Mammary epithelial cell (primary cell): ENCODE measurements at regions of chr6 and their contacts with region 1.

Region 1: GRCh38 chr6:41787219-41787917 is at the start of gene TOMM6:
- DNase-seq: peak; percentile 92
- H3K4me3 ChIP-seq: peak within 1 kb of the TSS; percentile 63 to 98 (median 97)
- H3K27ac ChIP-seq: peak within 1 kb of the TSS; percentile 95
- H3K4me1 ChIP-seq: peaks cover 20% of the 10 kb centered on the region
- H3K27me3 ChIP-seq: no peaks in the 10 kb centered on the region
- CTCF ChIP-seq: peak; percentile 76 to 90
- total RNA-seq, gene TOMM6: 59.7 to 175 TPM

Region 2: GRCh38 chr6:41713161-41713649 is 74.2 kb before region 1 on chr6:
- CTCF ChIA-PET with region 1: no interaction called
- dilution Hi-C with region 1: loop called (anchors 5 kb)
- in situ Hi-C with region 1: no loop called
- intact Hi-C with region 1: no loop called
- DNase-seq: peak; percentile 96
- H3K4me3 ChIP-seq: peak overlapping the region in 1 of 3 experiments; percentile 1
- H3K27ac ChIP-seq: peak overlapping the region; percentile 51
- H3K4me1 ChIP-seq: peaks cover 51% of the 10 kb centered on the region
- H3K27me3 ChIP-seq: no peaks in the 10 kb centered on the region
- CTCF ChIP-seq: no peak

Region 3: GRCh38 chr6:41846666-41847237 is 59.4 kb after region 1 on chr6:
- CTCF ChIA-PET with region 1: no interaction called
- dilution Hi-C with region 1: no loop called
- in situ Hi-C with region 1: no loop called
- intact Hi-C with region 1: loop called (anchors 1 kb)
- DNase-seq: peak; percentile 98
- H3K4me3 ChIP-seq: peak overlapping the region in 1 of 3 experiments; percentile 1
- H3K27ac ChIP-seq: peak overlapping the region; percentile 74
- H3K4me1 ChIP-seq: peaks cover 13% of the 10 kb centered on the region
- H3K27me3 ChIP-seq: no peaks in the 10 kb centered on the region
- CTCF ChIP-seq: peak; percentile 92 to 93

Region 4: DNA sequence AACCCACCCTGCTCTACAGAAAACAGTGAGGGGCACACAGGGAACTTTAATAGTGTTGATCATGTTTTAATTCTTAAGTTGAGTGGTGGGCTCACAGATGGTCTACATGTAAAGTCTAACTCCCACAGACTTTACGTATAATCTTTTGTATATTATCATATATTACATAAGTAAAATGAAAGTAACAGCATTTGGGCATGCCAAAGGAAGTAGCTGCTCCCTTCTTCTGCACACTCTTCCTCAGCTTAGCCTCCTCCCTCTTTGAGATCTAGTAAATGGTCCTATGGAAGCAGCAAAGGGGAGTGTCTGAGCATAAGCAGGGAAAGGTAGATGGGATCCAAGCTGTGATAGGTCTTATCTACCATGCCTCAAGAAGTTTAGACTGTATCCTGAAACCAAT is 122.4 kb after region 1 on chr6:
- CTCF ChIA-PET with region 1: no interaction called
- dilution Hi-C with region 1: no loop called
- in situ Hi-C with region 1: no loop called
- intact Hi-C with region 1: no loop called
- DNase-seq: no peak
- H3K4me3 ChIP-seq: no peak overlapping the region
- H3K27ac ChIP-seq: no peak overlapping the region
- H3K4me1 ChIP-seq: peaks cover under 1% of the 10 kb centered on the region
- H3K27me3 ChIP-seq: no peaks in the 10 kb centered on the region
- CTCF ChIP-seq: no peak

Region 5: GRCh38 chr6:41936073-41936837 is 148.9 kb after region 1 on chr6:
- CTCF ChIA-PET with region 1: no interaction called
- dilution Hi-C with region 1: no loop called
- in situ Hi-C with region 1: no loop called
- intact Hi-C with region 1: loop called (anchors 1 kb)
- DNase-seq: peak; percentile 80
- H3K4me3 ChIP-seq: no peak overlapping the region
- H3K27ac ChIP-seq: no peak overlapping the region
- H3K4me1 ChIP-seq: peaks cover 34% of the 10 kb centered on the region
- H3K27me3 ChIP-seq: no peaks in the 10 kb centered on the region
- CTCF ChIP-seq: peak; percentile 85 to 95

Region 6: GRCh38 chr6:42217519-42218367 is 430.4 kb after region 1 on chr6 and contains the start of gene MRPS10:
- CTCF ChIA-PET with region 1: no interaction called
- dilution Hi-C with region 1: no loop called
- in situ Hi-C with region 1: loop called in 1 of 2 experiments (anchors 25 kb)
- intact Hi-C with region 1: loop called (anchors 1 kb)
- DNase-seq: peak; percentile 90
- H3K4me3 ChIP-seq: peak within 1 kb of the TSS; percentile 78 to 100 (median 80)
- H3K27ac ChIP-seq: peak within 1 kb of the TSS; percentile 83
- H3K4me1 ChIP-seq: peaks cover 27% of the 10 kb centered on the region
- H3K27me3 ChIP-seq: no peaks in the 10 kb centered on the region
- CTCF ChIP-seq: no peak
- total RNA-seq, gene MRPS10: 41.2 to 50.9 TPM

Region 7: GRCh38 chr6:42532038-42532669 is 744.8 kb after region 1 on chr6:
- CTCF ChIA-PET with region 1: no interaction called
- dilution Hi-C with region 1: no loop called
- in situ Hi-C with region 1: no loop called
- intact Hi-C with region 1: no loop called
- DNase-seq: peak; percentile 40
- H3K4me3 ChIP-seq: no peak overlapping the region
- H3K27ac ChIP-seq: no peak overlapping the region
- H3K4me1 ChIP-seq: no peaks in the 10 kb centered on the region
- H3K27me3 ChIP-seq: peaks cover 1% of the 10 kb centered on the region
- CTCF ChIP-seq: peak; percentile 80 to 88